ENCODE measurements at regions of chr9 and their contacts with region 1.

Region 1: GRCh38 chr9:78073722-78074121 is 42.1 kb upstream of the GNAQ start:
- DNase-seq: no peak
- H3K4me3 Mint-ChIP-seq: peak overlapping the region; percentile 7
- H3K27ac Mint-ChIP-seq: peak overlapping the region; percentile 10
- H3K4me1 Mint-ChIP-seq: peaks cover 47% of the 10 kb centered on the region
- H3K27me3 Mint-ChIP-seq: no peaks in the 10 kb centered on the region

Region 2: GRCh38 chr9:78103971-78104433 is 30.3 kb after region 1 on chr9:
- intact Hi-C with region 1: loop called (anchors 2 kb)
- DNase-seq: peak; percentile 54
- H3K4me3 Mint-ChIP-seq: peak overlapping the region; percentile 22
- H3K27ac Mint-ChIP-seq: no peak overlapping the region
- H3K4me1 Mint-ChIP-seq: peaks cover 49% of the 10 kb centered on the region
- H3K27me3 Mint-ChIP-seq: no peaks in the 10 kb centered on the region

Measured in activated T-helper 2 cell treated with anti-CD3 and anti-CD28 coated beads, Interferon-gamma antibody, Interleukin-2, Interleukin-4, amounts not matched to agents 10 μg/mL and 5 μg/mL and 100 μg/mL, durations not matched to agents 14 hours and 24 hours and 36 hours (primary cell).